ENCODE measurements at regions of chr15 and their contacts with region 1.

Region 1: DNA sequence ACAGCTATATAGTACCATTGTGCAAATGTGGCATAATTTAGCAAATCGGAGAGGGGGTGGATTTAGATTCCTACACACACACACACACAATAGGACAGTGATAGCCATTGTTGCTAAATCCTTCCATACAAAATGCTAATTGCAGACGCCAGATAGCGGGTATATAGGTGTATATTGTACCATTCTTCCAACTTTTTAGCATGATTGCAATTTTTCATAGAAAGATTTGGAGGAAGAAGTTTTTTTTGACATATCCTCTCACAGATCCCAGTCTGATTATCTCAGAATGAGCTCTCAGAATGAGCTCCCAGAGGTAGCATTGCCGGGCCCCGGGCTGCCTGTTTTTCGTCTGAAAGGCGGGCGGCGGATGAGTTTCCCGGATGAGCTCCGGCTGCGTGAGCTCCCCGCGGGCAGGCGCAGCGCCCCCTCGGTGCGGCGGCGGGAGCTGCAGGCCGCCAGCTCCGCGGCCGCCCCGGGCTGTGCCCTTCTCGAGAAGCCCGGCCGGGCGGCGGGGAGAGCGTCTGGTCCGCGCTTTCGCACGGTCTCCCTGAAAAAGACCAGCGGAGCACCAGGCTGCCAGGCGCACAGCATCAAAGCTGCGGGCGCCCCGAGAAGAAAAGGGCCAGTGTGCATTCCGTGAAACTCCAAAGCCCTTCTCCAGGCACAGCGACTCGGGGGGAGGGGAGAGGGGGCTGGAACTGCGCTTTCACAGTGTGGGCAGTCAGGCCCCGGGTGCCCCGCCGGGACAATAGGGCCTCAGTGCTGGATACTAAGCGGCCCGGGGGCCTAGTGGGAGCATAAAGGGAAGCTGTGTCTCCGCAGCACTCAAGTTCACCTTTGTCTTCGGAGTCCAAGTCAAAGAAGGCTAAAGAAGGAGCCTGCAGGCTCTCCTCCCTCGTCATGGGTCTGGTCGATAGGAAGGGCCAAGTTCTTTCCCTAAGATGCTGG is 12.0 kb upstream of the SHC4 start:
- DNase-seq: peak; percentile 84
- ATAC-seq: peak; percentile 100
- H3K4me3 Mint-ChIP-seq: peak overlapping the region; percentile 60
- H3K27ac Mint-ChIP-seq: no peak overlapping the region
- H3K4me1 Mint-ChIP-seq: peaks cover 7% of the 10 kb centered on the region
- H3K27me3 Mint-ChIP-seq: peaks cover 7% of the 10 kb centered on the region

Region 2: GRCh38 chr15:48877630-48878595 is 97.8 kb before region 1 on chr15 and contains the start of gene EID1:
- CTCF ChIA-PET with region 1: interaction called, 17 read pairs
- DNase-seq: peak; percentile 97
- ATAC-seq: peak; percentile 93
- H3K4me3 Mint-ChIP-seq: peak within 1 kb of the TSS; percentile 93
- H3K27ac Mint-ChIP-seq: peak within 1 kb of the TSS; percentile 97
- H3K4me1 Mint-ChIP-seq: peaks cover 66% of the 10 kb centered on the region
- H3K27me3 Mint-ChIP-seq: peaks cover 8% of the 10 kb centered on the region
- total RNA-seq, gene EID1: 100 to 133 TPM

Region 3: DNA sequence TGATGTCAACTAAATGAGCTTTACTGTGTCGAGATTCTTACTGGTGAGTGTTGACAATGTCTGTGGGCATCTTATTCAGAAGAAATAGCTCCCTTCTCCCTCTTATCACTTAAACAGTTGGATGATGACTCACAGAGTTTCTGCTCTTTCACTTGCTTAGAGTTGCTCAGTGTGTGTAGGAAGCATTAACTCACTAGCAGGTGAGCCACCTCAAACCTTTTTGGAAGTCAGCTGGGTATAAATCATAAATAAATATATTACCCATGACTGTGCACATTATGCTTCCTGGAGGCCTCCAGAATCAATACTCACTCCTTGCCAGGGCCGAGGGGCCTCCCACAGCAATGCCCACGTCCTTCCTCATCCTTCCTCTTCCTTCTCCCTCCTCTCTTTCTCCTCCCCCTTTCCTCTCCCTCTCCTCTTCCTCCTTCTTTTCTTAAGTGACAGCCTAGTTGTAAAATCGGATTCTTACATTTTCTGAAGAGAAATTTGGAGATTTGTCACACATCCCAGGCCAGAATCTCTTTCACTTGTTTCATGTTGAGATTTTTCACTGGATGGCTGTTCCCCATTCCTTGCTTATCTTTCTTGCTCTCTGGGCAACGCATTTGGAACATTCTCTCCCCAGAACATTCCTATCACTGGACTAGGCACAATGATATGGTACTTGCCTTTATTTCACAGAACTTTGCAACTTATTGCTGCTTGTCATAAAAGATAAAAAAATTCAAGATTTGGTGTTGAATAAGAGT is 29.5 kb before region 1 on chr15:
- CTCF ChIA-PET with region 1: interaction called, 23 read pairs
- DNase-seq: no peak
- ATAC-seq: peak; percentile 74
- H3K4me3 Mint-ChIP-seq: no peak overlapping the region
- H3K27ac Mint-ChIP-seq: peak overlapping the region; percentile 58
- H3K4me1 Mint-ChIP-seq: peaks cover 27% of the 10 kb centered on the region
- H3K27me3 Mint-ChIP-seq: no peaks in the 10 kb centered on the region

Region 4: DNA sequence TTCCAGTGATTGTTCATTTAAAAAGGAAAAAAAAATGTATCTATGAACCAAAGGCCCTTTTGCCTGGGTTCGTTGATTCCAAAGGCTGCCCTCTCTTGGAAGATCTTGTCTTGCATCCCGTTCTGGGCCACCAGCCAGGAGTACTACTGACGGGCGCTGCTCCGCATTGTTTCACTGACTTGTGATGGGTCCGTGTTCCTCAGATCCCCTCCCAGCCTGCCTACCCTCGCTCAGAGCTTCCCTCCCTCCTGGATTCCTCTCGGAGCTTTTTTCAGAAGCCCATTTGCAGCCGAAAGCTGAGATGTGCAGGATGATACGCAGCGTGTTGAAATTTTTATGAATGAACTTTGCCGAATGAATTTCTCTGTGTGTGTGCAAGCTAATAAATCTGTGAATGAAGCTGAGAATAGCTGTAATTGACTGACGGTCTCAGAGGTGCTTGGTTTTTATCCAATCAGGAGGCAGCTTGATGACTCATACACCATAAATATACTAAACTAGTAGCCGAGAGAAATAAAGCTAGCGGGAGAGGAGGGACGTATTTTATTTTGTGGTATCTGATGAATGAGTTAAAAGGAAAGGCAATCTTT is 12.1 kb before region 1 on chr15 and contains the start of gene SHC4:
- CTCF ChIA-PET with region 1: interaction called, 70 read pairs
- DNase-seq: peak; percentile 46
- ATAC-seq: peak; percentile 59
- H3K4me3 Mint-ChIP-seq: peak within 1 kb of the TSS; percentile 81
- H3K27ac Mint-ChIP-seq: peak within 1 kb of the TSS; percentile 86
- H3K4me1 Mint-ChIP-seq: peaks cover 56% of the 10 kb centered on the region
- H3K27me3 Mint-ChIP-seq: peaks cover 12% of the 10 kb centered on the region
- total RNA-seq, gene SHC4: 3.0 to 9.8 TPM

Region 5: GRCh38 chr15:48992545-48992944 is 16.8 kb after region 1 on chr15:
- CTCF ChIA-PET with region 1: interaction called, 10 read pairs
- DNase-seq: no peak
- ATAC-seq: no peak
- H3K4me3 Mint-ChIP-seq: no peak overlapping the region
- H3K27ac Mint-ChIP-seq: no peak overlapping the region
- H3K4me1 Mint-ChIP-seq: no peaks in the 10 kb centered on the region
- H3K27me3 Mint-ChIP-seq: no peaks in the 10 kb centered on the region

Region 6: GRCh38 chr15:49026700-49027099 is 51.0 kb after region 1 on chr15:
- CTCF ChIA-PET with region 1: no interaction called
- DNase-seq: no peak
- ATAC-seq: no peak
- H3K4me3 Mint-ChIP-seq: no peak overlapping the region
- H3K27ac Mint-ChIP-seq: no peak overlapping the region
- H3K4me1 Mint-ChIP-seq: peaks cover 18% of the 10 kb centered on the region
- H3K27me3 Mint-ChIP-seq: no peaks in the 10 kb centered on the region

Region 7: DNA sequence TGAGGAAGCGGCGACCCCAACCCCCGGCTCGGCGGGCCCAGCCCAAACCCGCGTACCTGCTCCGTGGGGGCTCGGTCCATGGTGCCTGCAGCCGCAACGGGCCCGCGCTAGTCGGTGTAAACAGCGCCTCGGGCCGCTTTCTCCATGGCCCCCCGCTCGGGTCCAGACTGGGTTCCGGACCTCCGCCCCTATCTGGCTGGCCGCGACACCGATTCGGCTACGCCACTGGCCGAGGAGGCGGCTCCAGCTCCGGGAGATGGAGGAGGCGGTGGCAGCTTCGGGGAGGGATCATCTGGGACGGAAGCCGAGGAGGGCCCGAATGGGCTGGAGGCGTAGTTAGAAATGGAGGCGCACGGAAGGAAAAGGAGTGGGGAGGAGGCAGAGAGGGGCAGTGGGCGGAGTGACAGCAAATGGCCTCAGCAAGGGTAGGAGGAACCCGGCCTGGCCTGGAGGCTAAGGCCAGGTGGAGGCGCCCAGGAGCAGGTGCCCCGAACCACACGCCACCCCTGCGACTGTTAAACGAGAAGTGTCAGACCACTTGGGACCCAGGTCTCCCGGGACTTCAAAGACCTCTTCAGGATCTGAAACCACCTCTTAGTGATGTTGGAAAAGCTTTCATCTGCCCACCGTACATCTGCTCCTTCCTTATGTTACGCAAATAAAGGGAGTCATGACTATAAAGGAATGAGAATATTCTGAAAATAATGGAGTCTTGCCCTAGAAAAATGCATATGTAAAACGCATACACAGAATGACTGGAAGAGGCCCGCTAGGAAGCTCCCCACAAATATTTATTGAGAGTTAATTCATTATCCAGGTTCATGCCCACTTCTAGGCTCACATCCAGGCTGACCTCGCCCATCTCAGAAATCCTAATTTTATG is 70.7 kb after region 1 on chr15 and contains the start of gene SECISBP2L:
- CTCF ChIA-PET with region 1: interaction called, 11 read pairs
- DNase-seq: peak; percentile 95
- ATAC-seq: peak; percentile 94
- H3K4me3 Mint-ChIP-seq: peak within 1 kb of the TSS; percentile 97
- H3K27ac Mint-ChIP-seq: peak within 1 kb of the TSS; percentile 89
- H3K4me1 Mint-ChIP-seq: peaks cover 21% of the 10 kb centered on the region
- H3K27me3 Mint-ChIP-seq: no peaks in the 10 kb centered on the region
- total RNA-seq, gene SECISBP2L: 29.3 to 32.3 TPM

Region 8: GRCh38 chr15:49131403-49131802 is 155.7 kb after region 1 on chr15:
- CTCF ChIA-PET with region 1: interaction called, 10 read pairs
- DNase-seq: no peak
- ATAC-seq: no peak
- H3K4me3 Mint-ChIP-seq: no peak overlapping the region
- H3K27ac Mint-ChIP-seq: no peak overlapping the region
- H3K4me1 Mint-ChIP-seq: peaks cover 20% of the 10 kb centered on the region
- H3K27me3 Mint-ChIP-seq: no peaks in the 10 kb centered on the region

Region 9: DNA sequence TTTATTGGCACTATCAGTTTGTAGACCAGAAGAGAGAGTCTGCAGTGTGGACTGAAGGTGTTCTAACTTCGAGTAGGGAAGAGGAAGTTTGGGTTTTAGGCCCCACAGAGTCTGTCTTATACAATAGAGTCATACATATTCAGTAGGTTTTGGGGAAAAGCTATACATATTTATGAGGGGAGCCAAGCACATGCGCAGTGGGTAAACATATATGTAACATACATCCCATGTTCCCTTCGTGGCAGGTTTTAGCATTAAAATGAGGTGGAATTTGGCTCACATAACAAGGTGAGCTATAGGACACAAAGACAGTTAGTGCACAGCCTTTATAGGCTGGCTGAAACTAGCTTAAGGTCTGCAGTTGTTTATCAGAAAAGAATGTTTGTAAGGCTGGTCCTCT is 199.2 kb after region 1 on chr15:
- CTCF ChIA-PET with region 1: no interaction called
- DNase-seq: no peak
- ATAC-seq: no peak
- H3K4me3 Mint-ChIP-seq: no peak overlapping the region
- H3K27ac Mint-ChIP-seq: no peak overlapping the region
- H3K4me1 Mint-ChIP-seq: peaks cover 22% of the 10 kb centered on the region
- H3K27me3 Mint-ChIP-seq: no peaks in the 10 kb centered on the region